HEK293 (cell line): ENCODE measurements at regions of chr17 and their contacts with region 1.

Region 1: GRCh38 chr17:58517734-58518609 is 3.5 kb upstream of the MTMR4 start:
- H3K4me3 ChIP-seq: peak overlapping the region; percentile 79
- H3K27ac ChIP-seq: peak overlapping the region; percentile 84
- H3K4me1 ChIP-seq: peaks cover 3% of the 10 kb centered on the region; the same call in 1 of the 2 replicates
- CTCF ChIP-seq: no peak

Region 2: DNA sequence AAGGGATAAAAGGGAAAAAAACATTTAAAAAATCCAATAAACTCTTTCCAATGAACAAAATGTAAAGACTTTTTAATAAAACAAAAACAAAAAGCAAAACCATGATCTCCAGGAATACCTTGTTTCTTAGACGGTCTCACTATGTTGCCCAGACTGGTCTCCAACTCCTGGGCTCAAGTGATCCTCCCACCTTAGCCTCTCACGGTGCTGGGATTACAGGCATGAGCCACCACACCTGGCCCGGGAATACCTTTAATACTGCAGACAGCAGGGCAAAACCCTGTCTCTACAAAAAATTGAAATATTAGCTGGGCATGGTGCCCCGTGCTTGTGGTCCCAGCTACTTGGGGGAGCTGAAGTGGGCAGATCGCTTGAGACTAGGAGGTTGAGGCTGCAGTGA is 108.5 kb before region 1 on chr17:
- CTCF ChIA-PET with region 1: no interaction called
- POLR2A ChIA-PET with region 1: no interaction called
- H3K4me3 ChIP-seq: no peak overlapping the region
- H3K27ac ChIP-seq: no peak overlapping the region
- H3K4me1 ChIP-seq: peaks cover 43% of the 10 kb centered on the region
- CTCF ChIP-seq: no peak

Region 3: DNA sequence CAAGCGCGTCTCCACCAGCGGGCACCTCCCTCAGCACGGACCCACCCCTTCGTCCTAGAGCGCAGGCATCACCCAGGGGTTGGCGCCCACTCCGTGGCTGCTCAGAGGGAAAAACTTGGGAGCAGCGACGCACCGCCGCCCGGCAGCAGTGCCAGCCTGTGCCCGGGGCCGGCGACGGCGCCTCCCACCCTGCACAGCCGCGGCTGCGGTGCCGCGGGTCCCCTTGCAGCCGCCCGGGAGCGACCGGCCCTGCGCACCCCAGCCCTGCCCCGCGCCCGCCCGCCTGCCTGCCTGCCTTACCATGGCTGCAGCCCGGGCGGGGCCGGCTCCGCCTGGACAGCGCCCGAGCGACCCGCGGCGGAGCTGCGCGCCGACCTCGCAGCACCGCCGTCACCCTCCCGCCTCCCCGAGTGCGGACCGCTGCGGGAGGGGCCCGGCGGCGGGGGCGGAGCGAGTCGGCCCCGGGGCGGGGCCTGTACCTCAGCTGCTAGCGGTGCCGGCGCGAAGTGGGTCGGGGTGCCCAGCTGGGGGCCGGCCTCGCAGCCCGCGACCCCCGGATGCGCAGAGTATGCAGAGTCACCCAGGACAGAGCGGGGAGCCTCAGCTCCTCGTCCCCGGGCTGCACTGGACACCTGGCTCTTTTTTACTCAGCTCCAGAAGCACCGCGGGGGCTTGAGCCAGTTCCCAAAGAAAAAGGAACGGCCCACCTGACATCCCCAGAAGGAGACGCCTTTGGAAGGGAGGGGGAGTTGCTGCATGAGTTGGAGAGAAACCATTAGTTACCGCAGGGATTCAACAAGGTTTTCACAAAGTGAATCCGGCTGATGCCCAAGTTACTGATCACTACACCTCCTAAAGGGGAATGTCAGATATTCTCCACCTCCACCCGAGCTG is 13.9 kb after region 1 on chr17:
- CTCF ChIA-PET with region 1: interaction called, 11 read pairs
- POLR2A ChIA-PET with region 1: interaction called, 4 read pairs
- H3K4me3 ChIP-seq: peak overlapping the region; percentile 45
- H3K27ac ChIP-seq: no peak overlapping the region; the same call in 1 of the 2 replicates
- H3K4me1 ChIP-seq: no peaks in the 10 kb centered on the region
- CTCF ChIP-seq: no peak; the same call in 1 of the 2 replicates

Region 4: GRCh38 chr17:58587702-58588254 is 69.8 kb after region 1 on chr17:
- CTCF ChIA-PET with region 1: interaction called, 27 read pairs
- POLR2A ChIA-PET with region 1: interaction called, 5 read pairs
- H3K4me3 ChIP-seq: no peak overlapping the region
- H3K27ac ChIP-seq: no peak overlapping the region
- H3K4me1 ChIP-seq: no peaks in the 10 kb centered on the region
- CTCF ChIP-seq: peak; percentile 90

Region 5: DNA sequence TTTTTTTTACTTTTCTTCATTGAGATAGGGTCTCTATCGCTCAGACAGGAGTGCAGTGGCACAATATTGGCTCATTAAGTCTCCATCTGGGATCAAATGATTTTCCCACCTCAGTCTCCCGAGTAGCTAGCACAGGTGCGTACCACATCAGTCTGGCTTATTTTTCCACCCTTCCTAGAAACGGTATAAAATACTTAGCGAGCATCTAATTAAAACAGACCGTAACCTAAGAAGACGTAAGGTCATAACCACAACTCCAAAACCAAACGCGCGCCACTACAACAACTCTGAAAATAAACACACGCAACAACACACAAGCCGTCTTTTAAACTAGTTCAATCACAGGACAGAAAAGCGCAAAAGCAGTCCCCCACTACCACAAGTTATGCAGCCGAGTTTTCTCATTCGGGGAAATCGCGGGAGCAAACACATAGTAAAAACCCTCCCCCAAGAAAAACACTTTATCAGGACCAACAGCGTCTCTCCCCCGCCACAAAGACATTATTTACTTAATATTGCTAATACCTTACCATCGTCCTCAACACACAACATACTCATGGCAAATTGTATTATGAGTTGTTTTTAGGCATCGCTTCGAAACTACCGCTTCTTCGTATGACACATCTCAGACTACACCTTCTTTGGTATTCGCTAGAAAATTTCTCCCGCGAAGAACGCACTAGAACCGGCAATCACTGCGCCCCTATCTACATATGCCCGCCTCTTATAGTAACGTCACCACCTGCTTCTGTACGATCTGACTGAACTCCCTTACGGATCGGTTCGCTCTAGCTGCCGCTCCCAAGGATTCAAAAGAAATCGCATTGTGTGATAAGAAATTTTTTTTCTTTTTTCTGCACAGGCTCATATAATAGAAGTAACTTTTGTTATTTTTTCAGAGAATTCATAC is 141.1 kb after region 1 on chr17:
- CTCF ChIA-PET with region 1: interaction called, 5 read pairs
- POLR2A ChIA-PET with region 1: interaction called, 10 read pairs
- H3K4me3 ChIP-seq: peak overlapping the region; percentile 25
- H3K27ac ChIP-seq: peak overlapping the region; percentile 97
- H3K4me1 ChIP-seq: no peaks in the 10 kb centered on the region
- CTCF ChIP-seq: no peak

Region 6: GRCh38 chr17:58710936-58711775 is 193.2 kb after region 1 on chr17:
- CTCF ChIA-PET with region 1: interaction called, 10 read pairs
- POLR2A ChIA-PET with region 1: no interaction called
- H3K4me3 ChIP-seq: no peak overlapping the region
- H3K27ac ChIP-seq: no peak overlapping the region
- H3K4me1 ChIP-seq: no peaks in the 10 kb centered on the region
- CTCF ChIP-seq: peak; percentile 24; the same call in 1 of the 2 replicates

Region 7: DNA sequence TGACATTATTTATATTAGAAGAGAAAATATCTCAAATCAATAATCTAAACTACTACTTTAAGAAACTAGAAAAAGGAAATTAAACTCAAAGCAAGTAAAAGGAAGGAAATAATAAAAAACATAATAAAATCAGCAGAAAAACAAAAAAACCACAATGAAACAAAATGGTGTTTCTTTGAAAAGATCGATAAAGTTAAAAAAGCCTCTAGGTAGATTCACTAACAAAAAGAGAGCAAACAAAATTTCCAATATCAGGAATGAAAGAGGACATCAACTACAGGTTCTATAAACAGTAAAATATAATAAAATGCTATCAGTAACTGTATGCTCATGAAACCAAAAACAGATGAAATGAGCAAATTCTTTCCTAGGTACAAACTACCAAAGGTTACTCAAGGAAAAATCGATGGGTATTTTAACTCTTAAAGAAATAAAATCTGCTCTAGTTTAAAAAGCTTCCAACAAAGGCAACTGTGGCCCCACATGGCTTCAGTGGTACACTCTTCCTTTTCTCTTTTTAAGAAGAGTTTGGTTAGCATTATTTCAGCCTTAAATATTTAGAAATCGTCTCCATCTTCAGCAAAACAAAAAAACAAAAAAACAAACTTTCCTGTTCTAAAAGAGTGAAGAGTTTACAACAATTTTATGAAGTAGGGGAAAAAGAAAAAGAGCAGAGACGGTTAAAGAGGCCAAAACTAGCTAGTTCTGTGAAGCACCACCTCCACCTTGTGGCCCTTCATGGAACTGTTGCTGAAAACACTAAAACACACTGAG is 486.6 kb after region 1 on chr17:
- CTCF ChIA-PET with region 1: interaction called, 19 read pairs
- POLR2A ChIA-PET with region 1: interaction called, 14 read pairs
- H3K4me3 ChIP-seq: no peak overlapping the region
- H3K27ac ChIP-seq: no peak overlapping the region
- H3K4me1 ChIP-seq: no peaks in the 10 kb centered on the region
- CTCF ChIP-seq: peak; percentile 83